Ovary (tissue), 10 donors: ENCODE measurements at regions of chr2 and their contacts with region 1.

Region 1: GRCh38 chr2:126776692-126777619 is 121.0 kb downstream of the GYPC start:
- DNase-seq: peak; percentile 72 to 89 (median 80)
- H3K4me3 ChIP-seq: peak overlapping the region; percentile 43
- H3K27ac ChIP-seq: no peak overlapping the region
- H3K4me1 ChIP-seq: peaks cover 1% of the 10 kb centered on the region
- H3K27me3 ChIP-seq: no peaks in the 10 kb centered on the region
- CTCF ChIP-seq: peak; percentile 81 to 85 (median 83)
- EP300 ChIP-seq: no peak
- POLR2A ChIP-seq: no peak

Region 2: DNA sequence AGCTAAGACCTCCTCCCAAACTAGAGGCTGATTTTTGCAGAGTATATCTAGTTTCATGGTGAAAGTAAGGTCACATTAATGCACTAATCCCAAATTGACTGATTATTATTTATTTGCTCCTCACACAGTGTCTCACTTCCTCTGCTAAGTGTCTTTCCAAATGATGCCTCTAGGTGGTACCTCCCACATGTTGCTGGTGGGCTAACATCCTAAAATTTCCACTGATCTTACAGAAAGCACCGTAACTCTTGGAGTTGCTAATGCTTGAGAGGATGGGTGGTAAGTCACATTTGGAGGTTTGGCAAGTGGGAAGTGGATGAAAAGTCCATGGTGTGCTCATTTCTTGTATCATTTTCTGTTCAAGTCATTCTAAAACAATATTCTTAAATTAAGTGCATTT is 549.7 kb before region 1 on chr2:
- intact Hi-C with region 1: loop called in 1 of 4 experiments (anchors 10 kb)
- DNase-seq: no peak
- H3K4me3 ChIP-seq: no peak overlapping the region
- H3K27ac ChIP-seq: no peak overlapping the region
- H3K4me1 ChIP-seq: no peaks in the 10 kb centered on the region
- H3K27me3 ChIP-seq: no peaks in the 10 kb centered on the region
- CTCF ChIP-seq: no peak
- EP300 ChIP-seq: no peak
- POLR2A ChIP-seq: no peak

Region 3: GRCh38 chr2:126527836-126528507 is 249.0 kb before region 1 on chr2:
- intact Hi-C with region 1: loop called (anchors 2 to 10 kb)
- DNase-seq: peak; percentile 55 to 74 (median 68)
- H3K4me3 ChIP-seq: no peak overlapping the region
- H3K27ac ChIP-seq: no peak overlapping the region
- H3K4me1 ChIP-seq: no peaks in the 10 kb centered on the region
- H3K27me3 ChIP-seq: no peaks in the 10 kb centered on the region
- CTCF ChIP-seq: peak in 1 of 3 donors; percentile 14
- EP300 ChIP-seq: no peak
- POLR2A ChIP-seq: no peak

Region 4: GRCh38 chr2:126534478-126534877 is 242.5 kb before region 1 on chr2:
- intact Hi-C with region 1: loop called in 3 of 4 experiments (anchors 5 to 10 kb)
- DNase-seq: no peak
- H3K4me3 ChIP-seq: no peak overlapping the region
- H3K27ac ChIP-seq: no peak overlapping the region
- H3K4me1 ChIP-seq: no peaks in the 10 kb centered on the region
- H3K27me3 ChIP-seq: no peaks in the 10 kb centered on the region
- CTCF ChIP-seq: no peak
- EP300 ChIP-seq: no peak
- POLR2A ChIP-seq: no peak

Region 5: GRCh38 chr2:126627643-126628042 is 149.3 kb before region 1 on chr2:
- intact Hi-C with region 1: loop called in 1 of 4 experiments (anchors 10 kb)
- DNase-seq: no peak
- H3K4me3 ChIP-seq: no peak overlapping the region
- H3K27ac ChIP-seq: no peak overlapping the region
- H3K4me1 ChIP-seq: no peaks in the 10 kb centered on the region
- H3K27me3 ChIP-seq: no peaks in the 10 kb centered on the region
- CTCF ChIP-seq: no peak
- EP300 ChIP-seq: no peak
- POLR2A ChIP-seq: no peak

Region 6: GRCh38 chr2:126678269-126679065 is 98.5 kb before region 1 on chr2:
- intact Hi-C with region 1: no loop called
- DNase-seq: no peak
- H3K4me3 ChIP-seq: no peak overlapping the region
- H3K27ac ChIP-seq: no peak overlapping the region
- H3K4me1 ChIP-seq: no peaks in the 10 kb centered on the region
- H3K27me3 ChIP-seq: no peaks in the 10 kb centered on the region
- CTCF ChIP-seq: no peak
- EP300 ChIP-seq: no peak
- POLR2A ChIP-seq: no peak